Activated T-helper 1 cell treated with anti-CD3 and anti-CD28 coated beads, Interleukin-12 subunit alpha, Interleukin-12 subunit beta, Interleukin-2, Interleukin-4 antibody, amounts not matched to agents 30 ng/mL and 10 ng/mL and 1 ng/mL, durations not matched to agents 14 hours and 24 hours and 36 hours (primary cell): ENCODE measurements at regions of chr20 and their contacts with region 1.

Region 1: GRCh38 chr20:19661717-19662636 is 96.1 kb upstream of the RIN2 start:
- DNase-seq: peak; percentile 11
- H3K4me3 Mint-ChIP-seq: no peak overlapping the region
- H3K27ac Mint-ChIP-seq: no peak overlapping the region
- H3K4me1 Mint-ChIP-seq: no peaks in the 10 kb centered on the region
- H3K27me3 Mint-ChIP-seq: peaks cover 3% of the 10 kb centered on the region

Region 2: DNA sequence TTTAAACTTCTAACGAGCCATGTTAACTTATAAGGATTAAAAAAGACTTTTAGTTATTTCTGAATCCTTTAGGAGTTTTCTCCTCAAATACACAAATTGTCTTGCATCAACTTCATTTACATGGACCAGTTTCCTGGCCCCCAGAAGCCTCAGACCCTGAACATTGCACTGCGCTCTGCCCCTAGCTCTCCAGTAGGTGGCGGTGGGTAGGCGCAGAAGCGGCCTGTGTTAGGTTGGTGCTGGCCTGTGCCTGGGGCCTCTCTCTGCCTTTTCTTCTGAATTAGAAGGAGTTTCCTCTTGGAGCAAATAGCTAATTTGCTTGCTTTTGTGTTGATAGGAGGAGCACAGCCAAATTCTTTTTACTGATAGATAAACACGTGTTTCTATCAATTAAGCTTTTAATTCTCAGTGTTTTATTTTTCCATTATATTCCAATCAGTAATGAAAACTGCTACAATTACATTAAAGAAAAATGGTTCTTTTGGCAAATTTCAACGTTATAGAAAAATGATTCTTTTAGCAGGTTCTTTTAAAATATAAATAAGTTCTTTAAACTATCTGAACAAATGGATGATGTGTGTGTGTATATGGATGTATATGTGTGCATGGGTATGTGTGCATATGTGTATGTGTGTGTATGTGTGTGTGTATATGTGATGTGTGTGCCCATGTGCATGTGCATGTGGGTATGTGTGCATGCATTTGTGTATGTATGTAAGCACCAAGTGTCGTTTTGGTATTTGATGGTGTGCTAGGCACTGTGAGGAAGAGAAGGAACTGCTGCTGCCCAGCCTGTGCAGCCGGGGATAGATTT is 1029.6 kb before region 1 on chr20:
- intact Hi-C with region 1: loop called (anchors 5 kb)
- DNase-seq: peak; percentile 19
- H3K4me3 Mint-ChIP-seq: no peak overlapping the region
- H3K27ac Mint-ChIP-seq: no peak overlapping the region
- H3K4me1 Mint-ChIP-seq: no peaks in the 10 kb centered on the region
- H3K27me3 Mint-ChIP-seq: no peaks in the 10 kb centered on the region

Region 3: DNA sequence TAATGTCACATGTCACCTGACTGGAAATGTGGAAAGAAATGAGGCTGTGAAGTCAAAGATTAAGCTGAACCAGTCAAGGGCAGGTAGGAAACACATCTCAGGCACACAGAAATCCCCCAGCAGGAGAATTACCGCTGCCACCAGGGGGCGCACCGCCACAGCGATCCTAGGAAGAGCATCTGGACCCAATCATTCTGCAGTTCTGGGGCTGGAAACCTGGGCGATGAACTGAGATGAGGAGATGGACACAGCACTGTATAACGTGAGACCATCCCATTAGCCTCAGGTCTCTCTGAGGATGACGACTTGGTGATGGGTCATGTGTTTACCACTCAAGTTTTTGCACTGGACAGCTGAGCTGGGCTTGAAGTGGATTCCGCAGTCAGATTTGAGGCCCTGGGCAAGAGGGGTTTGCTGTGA is 456.0 kb before region 1 on chr20:
- intact Hi-C with region 1: loop called (anchors 1 kb)
- DNase-seq: peak; percentile 32
- H3K4me3 Mint-ChIP-seq: no peak overlapping the region
- H3K27ac Mint-ChIP-seq: no peak overlapping the region
- H3K4me1 Mint-ChIP-seq: no peaks in the 10 kb centered on the region
- H3K27me3 Mint-ChIP-seq: peaks cover 11% of the 10 kb centered on the region

Region 4: DNA sequence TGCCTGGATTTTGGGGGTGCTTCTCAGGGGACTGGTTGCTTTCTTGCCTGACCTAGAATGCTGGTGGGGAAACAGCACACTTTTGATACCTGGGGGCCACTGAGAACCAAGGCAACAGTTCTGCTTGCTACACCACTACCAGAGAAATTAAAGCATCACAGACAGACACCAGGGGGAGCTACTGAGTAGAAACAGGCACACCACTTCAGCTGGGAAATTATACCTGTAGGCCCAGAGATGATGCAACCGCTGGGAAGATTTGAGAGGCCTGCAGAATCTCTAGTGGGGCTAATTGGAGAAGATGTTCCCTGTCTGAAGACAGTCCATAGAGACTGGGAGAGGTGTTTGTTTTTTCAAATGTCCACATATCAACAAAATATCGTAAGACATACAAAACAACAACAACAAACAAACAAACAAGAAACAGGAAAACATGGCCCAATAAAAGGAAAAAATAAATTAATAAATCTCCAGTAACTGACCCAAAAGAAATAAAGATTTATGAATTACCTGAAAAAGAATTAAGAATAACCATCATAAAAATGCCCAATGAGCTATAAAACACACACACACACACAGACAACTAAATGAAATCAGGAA is 33.3 kb before region 1 on chr20:
- intact Hi-C with region 1: loop called (anchors 1 kb)
- DNase-seq: peak; percentile 11
- H3K4me3 Mint-ChIP-seq: no peak overlapping the region
- H3K27ac Mint-ChIP-seq: no peak overlapping the region
- H3K4me1 Mint-ChIP-seq: no peaks in the 10 kb centered on the region
- H3K27me3 Mint-ChIP-seq: peaks cover 1% of the 10 kb centered on the region

Region 5: DNA sequence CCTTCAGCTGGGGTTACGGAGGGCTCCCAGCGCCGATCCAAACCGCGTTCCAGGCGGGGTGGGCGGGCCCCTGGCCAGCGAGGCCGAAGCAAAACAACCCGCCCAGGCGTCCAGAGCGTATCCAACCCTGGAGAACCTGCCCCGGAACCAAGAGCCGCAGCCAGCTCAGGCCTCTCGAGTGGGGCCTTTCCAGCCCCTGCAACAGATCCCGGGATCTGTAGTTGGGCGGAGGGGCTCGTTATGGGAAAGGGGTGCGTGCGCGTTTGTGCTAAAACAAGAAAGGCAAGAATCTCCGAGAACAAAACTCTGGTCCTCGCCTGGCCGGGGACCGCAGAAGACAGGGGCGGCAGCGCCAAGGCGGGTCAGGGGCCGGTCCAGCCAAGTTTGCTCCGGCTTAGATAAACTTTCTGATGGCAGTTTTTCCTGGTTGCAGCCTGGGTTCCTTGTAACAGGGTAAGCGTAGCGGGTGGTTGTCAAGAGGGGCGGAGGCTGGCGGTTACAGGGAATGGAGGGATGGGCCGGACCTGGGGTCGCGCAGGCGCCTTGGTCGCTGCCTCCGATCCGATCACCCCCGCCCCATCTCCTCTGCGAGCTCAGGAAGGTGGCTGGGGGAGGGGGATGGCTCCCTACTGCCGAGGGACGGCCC is 95.6 kb after region 1 on chr20:
- intact Hi-C with region 1: no loop called
- DNase-seq: no peak
- H3K4me3 Mint-ChIP-seq: peak overlapping the region; percentile 39
- H3K27ac Mint-ChIP-seq: no peak overlapping the region
- H3K4me1 Mint-ChIP-seq: no peaks in the 10 kb centered on the region
- H3K27me3 Mint-ChIP-seq: peaks cover 28% of the 10 kb centered on the region